Activated B cell treated with CpG ODN at 0.5 μM for 24 hours (primary cell): ENCODE measurements at regions of chr14 and their contacts with region 1.

Region 1: GRCh38 chr14:105830171-105830570 is 303.8 kb downstream of the TMEM121 start:
- DNase-seq: no peak
- ATAC-seq: peak; percentile 47
- H3K4me3 Mint-ChIP-seq: no peak overlapping the region
- H3K27ac Mint-ChIP-seq: peak overlapping the region; percentile 53
- H3K4me1 Mint-ChIP-seq: peaks cover 31% of the 10 kb centered on the region
- H3K27me3 Mint-ChIP-seq: no peaks in the 10 kb centered on the region
- CTCF ChIP-seq: no peak

Region 2: GRCh38 chr14:105499256-105500030 is 330.7 kb before region 1 on chr14:
- CTCF ChIA-PET with region 1: no interaction called
- POLR2A ChIA-PET with region 1: no interaction called
- intact Hi-C with region 1: no loop called
- DNase-seq: no peak
- ATAC-seq: no peak
- H3K4me3 Mint-ChIP-seq: no peak overlapping the region
- H3K27ac Mint-ChIP-seq: no peak overlapping the region
- H3K4me1 Mint-ChIP-seq: no peaks in the 10 kb centered on the region
- H3K27me3 Mint-ChIP-seq: peaks cover 4% of the 10 kb centered on the region
- CTCF ChIP-seq: no peak

Region 3: DNA sequence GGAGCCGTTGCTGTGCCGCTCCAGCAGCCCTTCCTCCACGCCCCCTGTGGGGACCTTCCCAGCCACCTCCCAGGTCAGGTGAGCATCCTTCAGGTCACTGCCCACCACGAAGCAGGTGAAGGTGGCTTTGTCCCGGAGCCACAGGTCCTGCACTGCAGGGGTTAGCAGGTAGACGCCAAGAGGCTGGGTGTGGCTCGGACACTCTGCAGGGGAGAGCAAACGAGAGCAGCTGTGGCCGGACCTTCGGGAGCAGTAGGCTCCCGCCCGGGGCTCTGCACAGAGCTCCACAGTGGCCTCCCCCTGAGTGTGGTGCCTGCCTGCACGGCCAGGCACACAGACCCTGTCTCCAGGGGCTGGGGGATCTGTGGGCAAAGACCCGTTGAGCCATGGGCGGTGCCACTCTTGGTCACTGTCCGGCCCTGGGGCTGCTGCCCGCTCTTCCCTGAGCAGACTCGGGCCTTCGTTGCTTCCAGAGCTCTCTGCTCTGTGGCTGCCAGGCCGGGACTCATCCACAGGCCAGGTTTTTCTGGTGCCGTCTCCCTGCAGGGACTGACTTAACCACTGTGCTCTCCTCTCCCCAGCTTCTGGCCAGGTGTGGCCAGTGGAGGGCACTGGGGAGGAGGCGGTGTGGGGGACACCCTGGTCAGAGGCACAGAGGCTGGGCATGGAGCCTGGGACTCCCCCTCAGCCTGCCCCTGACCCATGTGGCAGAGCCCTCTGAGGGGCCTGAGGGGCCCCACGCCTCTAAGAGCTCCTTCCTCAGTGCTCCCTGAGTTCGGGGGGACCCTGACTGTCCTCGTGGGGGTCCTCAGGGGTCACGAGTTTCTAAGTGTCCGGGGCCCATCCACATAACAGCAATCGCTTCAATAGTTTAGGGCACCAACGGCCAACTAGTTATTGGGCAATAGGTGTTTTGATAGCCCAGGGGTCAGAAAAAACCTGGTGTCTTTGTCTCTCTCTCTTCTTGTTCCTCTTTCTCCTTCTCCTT is 11.1 kb after region 1 on chr14:
- CTCF ChIA-PET with region 1: no interaction called
- POLR2A ChIA-PET with region 1: interaction called, 14 read pairs
- intact Hi-C with region 1: no loop called
- DNase-seq: no peak
- ATAC-seq: no peak
- H3K4me3 Mint-ChIP-seq: no peak overlapping the region
- H3K27ac Mint-ChIP-seq: peak overlapping the region; percentile 57
- H3K4me1 Mint-ChIP-seq: peaks cover 16% of the 10 kb centered on the region
- H3K27me3 Mint-ChIP-seq: no peaks in the 10 kb centered on the region
- CTCF ChIP-seq: no peak